Activated T-helper 1 cell treated with anti-CD3 and anti-CD28 coated beads, Interleukin-12 subunit alpha, Interleukin-12 subunit beta, Interleukin-2, Interleukin-4 antibody, amounts not matched to agents 30 ng/mL and 10 ng/mL and 1 ng/mL, durations not matched to agents 14 hours and 24 hours and 36 hours (primary cell): ENCODE measurements at regions of chr1 and their contacts with region 1.

Region 1: DNA sequence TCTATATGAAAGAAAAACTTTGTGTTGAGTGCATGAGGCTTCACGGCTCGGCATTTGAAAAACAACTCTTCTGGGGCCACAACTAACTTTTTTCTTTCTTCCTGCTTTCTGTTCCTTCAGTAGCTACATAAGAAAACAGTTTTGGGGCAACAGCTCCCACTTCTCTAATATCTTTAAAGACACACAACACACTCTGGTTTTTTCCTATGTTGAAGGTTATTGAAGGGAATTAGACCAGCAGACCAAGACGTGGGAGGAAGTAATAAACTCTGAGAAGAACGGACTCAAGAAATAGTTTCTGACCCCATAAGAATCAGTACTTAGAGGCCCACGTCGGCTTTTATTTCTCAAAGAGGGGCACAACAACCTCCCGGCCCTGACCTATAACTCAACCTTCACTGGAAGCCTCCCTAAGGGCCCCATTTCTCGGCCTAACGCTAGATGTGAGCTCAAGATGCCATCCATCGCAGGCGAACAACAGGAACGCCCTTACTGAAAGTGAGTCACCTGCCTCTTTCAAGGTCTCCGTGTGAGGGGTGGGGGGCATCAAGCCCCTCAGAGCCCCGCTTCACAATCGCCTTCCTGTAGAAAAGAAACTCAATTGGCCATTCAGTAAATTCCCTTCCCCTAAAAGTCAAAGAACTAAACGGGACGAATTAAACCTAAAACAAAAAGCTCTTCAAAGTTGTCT is 844 bp downstream of the ZMYM6 start:
- DNase-seq: peak; percentile 27
- H3K4me3 Mint-ChIP-seq: peak overlapping the region; percentile 98
- H3K27ac Mint-ChIP-seq: peak overlapping the region; percentile 97
- H3K4me1 Mint-ChIP-seq: peaks cover 35% of the 10 kb centered on the region
- H3K27me3 Mint-ChIP-seq: no peaks in the 10 kb centered on the region

Region 2: GRCh38 chr1:34029515-34030300 is 1001.2 kb before region 1 on chr1:
- intact Hi-C with region 1: no loop called
- DNase-seq: no peak
- H3K4me3 Mint-ChIP-seq: no peak overlapping the region
- H3K27ac Mint-ChIP-seq: no peak overlapping the region
- H3K4me1 Mint-ChIP-seq: no peaks in the 10 kb centered on the region
- H3K27me3 Mint-ChIP-seq: peaks cover 6% of the 10 kb centered on the region

Region 3: DNA sequence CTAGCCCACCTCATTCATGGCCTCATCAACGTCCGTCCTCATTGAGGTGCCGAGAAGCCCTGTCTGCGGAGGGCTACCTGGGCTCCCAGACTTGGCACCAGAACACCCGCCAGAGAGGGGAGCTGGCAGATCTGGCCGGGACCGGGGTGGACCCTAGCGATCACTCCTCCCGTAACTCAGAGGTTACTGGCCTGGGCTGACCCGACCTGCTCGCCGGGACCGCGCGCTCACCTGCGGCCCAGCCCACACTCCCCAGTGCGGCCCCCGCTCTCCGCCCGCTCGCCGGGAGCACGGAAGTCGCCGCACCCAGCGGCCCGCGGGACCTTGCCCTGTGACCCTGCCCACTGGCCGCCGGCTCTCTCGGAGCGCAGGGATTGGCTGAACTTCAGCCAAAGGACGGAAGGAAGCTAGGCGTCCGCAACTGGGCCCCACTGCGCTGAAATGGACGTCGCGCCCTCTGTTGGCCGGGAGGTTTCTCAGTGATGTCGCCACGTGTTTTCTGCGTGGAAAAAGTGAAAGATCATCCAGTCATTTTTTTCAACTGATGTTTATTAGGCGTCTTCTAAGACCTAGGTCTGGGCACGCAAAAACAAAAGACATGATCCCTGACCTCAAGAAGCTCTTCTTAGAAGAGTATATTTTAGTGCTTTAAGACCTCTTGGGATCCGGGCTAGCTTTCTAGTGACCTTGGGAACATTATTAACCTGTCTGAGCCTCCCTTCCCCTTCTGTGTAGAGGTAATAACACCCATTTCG is 171.3 kb before region 1 on chr1 and contains the start of gene SMIM12:
- intact Hi-C with region 1: loop called (anchors 2 kb)
- DNase-seq: peak; percentile 90
- H3K4me3 Mint-ChIP-seq: peak within 1 kb of the TSS; percentile 98
- H3K27ac Mint-ChIP-seq: peak within 1 kb of the TSS; percentile 96
- H3K4me1 Mint-ChIP-seq: peaks cover 51% of the 10 kb centered on the region
- H3K27me3 Mint-ChIP-seq: peaks cover 4% of the 10 kb centered on the region
- total RNA-seq, gene SMIM12: 62.4 and 66.2 TPM in 2 replicates

Region 4: GRCh38 chr1:35079003-35079930 is 48.4 kb after region 1 on chr1 and contains the start of gene ZMYM1:
- intact Hi-C with region 1: loop called (anchors 1 kb)
- DNase-seq: peak; percentile 82
- H3K4me3 Mint-ChIP-seq: peak within 1 kb of the TSS; percentile 98
- H3K27ac Mint-ChIP-seq: peak within 1 kb of the TSS; percentile 100
- H3K4me1 Mint-ChIP-seq: peaks cover 34% of the 10 kb centered on the region
- H3K27me3 Mint-ChIP-seq: no peaks in the 10 kb centered on the region
- total RNA-seq, gene ZMYM1: 3.3 and 5.3 TPM in 2 replicates

Region 5: GRCh38 chr1:35268282-35269200 is 237.6 kb after region 1 on chr1 and contains the start of gene ZMYM4:
- intact Hi-C with region 1: loop called (anchors 1 kb)
- DNase-seq: peak; percentile 88
- H3K4me3 Mint-ChIP-seq: peak within 1 kb of the TSS; percentile 87
- H3K27ac Mint-ChIP-seq: peak within 1 kb of the TSS; percentile 93
- H3K4me1 Mint-ChIP-seq: peaks cover 38% of the 10 kb centered on the region
- H3K27me3 Mint-ChIP-seq: no peaks in the 10 kb centered on the region
- total RNA-seq, gene ZMYM4: 25.1 and 33.0 TPM in 2 replicates

Region 6: DNA sequence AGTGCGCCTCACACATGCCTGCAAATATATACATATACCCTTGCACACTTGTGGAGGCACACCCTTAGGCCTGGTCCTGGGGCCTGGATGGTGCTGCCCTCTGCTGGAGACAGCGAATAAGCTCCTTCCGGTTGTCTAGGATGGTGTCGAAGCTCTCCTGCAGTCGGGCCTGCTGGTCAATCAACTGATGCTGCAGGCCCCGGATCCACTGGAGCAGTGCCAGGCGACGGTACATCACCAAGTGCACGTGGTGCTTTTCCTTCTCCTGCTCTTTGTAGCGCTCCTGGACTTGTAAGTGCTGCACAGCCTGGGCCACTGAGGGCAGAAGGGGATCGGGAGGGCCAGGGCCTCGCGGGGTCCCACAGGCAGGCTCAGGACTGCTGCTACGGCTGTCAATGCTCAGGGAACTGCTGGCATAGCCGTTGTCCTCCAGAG is 684.7 kb after region 1 on chr1:
- intact Hi-C with region 1: loop called (anchors 5 kb)
- DNase-seq: peak; percentile 69
- H3K4me3 Mint-ChIP-seq: peak overlapping the region; percentile 56
- H3K27ac Mint-ChIP-seq: no peak overlapping the region
- H3K4me1 Mint-ChIP-seq: peaks cover 37% of the 10 kb centered on the region
- H3K27me3 Mint-ChIP-seq: peaks cover 4% of the 10 kb centered on the region